Mammary epithelial cell (primary cell): ENCODE measurements at regions of chr2 and their contacts with region 1.

Region 1: GRCh38 chr2:228657807-228658402 is 476.4 kb upstream of the SPHKAP start:
- DNase-seq: peak; percentile 23
- H3K4me3 ChIP-seq: no peak overlapping the region
- H3K27ac ChIP-seq: no peak overlapping the region
- H3K4me1 ChIP-seq: no peaks in the 10 kb centered on the region
- H3K27me3 ChIP-seq: peaks cover 10% of the 10 kb centered on the region
- CTCF ChIP-seq: peak; percentile 46 to 60

Region 2: GRCh38 chr2:227884511-227884947 is 773.4 kb before region 1 on chr2:
- CTCF ChIA-PET with region 1: no interaction called
- dilution Hi-C with region 1: no loop called
- in situ Hi-C with region 1: loop called in 1 of 2 experiments (anchors 25 kb)
- intact Hi-C with region 1: no loop called
- DNase-seq: peak; percentile 58
- H3K4me3 ChIP-seq: no peak overlapping the region
- H3K27ac ChIP-seq: no peak overlapping the region
- H3K4me1 ChIP-seq: peaks cover 7% of the 10 kb centered on the region
- H3K27me3 ChIP-seq: no peaks in the 10 kb centered on the region
- CTCF ChIP-seq: peak; percentile 90 to 98

Region 3: DNA sequence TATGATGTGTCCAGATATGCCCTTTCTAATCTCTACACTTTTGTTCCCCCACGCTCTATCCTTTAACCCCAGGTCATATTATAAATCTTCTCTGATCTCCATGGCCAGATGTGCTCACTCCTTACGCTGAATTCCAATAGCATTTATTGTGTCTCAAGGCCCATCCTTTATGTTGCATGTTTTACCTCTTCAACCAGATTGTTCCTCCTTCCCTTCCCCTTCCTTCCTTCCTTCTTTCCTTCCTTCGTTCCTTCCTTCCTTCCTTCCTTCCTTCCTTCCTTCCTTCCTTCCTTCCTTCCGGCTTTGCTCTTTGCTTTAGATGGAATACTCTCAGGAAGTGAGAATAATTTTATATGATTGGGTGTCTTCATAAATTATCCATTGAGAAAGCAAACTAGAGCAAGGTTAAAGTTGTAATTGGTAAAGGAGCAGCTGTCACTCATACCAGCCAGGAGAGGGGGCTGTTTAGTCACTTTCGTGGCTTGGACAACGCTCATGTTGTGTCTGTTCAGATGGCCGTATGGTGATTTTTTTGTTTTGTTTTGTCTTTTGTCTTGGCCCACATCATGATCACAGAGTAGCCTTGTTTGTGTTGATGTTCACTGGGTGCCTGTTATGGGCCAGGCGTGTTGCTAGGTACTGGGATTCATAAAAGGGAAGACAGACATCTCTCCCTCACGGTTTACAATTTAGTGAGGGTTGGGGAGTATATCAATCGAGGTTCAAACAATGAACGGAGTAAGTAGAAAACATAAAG is 718.5 kb before region 1 on chr2:
- CTCF ChIA-PET with region 1: no interaction called
- dilution Hi-C with region 1: no loop called
- in situ Hi-C with region 1: no loop called
- intact Hi-C with region 1: loop called (anchors 2 kb)
- DNase-seq: peak; percentile 16
- H3K4me3 ChIP-seq: no peak overlapping the region
- H3K27ac ChIP-seq: no peak overlapping the region
- H3K4me1 ChIP-seq: no peaks in the 10 kb centered on the region
- H3K27me3 ChIP-seq: peaks cover 2% of the 10 kb centered on the region
- CTCF ChIP-seq: peak; percentile 68 to 74

Region 4: DNA sequence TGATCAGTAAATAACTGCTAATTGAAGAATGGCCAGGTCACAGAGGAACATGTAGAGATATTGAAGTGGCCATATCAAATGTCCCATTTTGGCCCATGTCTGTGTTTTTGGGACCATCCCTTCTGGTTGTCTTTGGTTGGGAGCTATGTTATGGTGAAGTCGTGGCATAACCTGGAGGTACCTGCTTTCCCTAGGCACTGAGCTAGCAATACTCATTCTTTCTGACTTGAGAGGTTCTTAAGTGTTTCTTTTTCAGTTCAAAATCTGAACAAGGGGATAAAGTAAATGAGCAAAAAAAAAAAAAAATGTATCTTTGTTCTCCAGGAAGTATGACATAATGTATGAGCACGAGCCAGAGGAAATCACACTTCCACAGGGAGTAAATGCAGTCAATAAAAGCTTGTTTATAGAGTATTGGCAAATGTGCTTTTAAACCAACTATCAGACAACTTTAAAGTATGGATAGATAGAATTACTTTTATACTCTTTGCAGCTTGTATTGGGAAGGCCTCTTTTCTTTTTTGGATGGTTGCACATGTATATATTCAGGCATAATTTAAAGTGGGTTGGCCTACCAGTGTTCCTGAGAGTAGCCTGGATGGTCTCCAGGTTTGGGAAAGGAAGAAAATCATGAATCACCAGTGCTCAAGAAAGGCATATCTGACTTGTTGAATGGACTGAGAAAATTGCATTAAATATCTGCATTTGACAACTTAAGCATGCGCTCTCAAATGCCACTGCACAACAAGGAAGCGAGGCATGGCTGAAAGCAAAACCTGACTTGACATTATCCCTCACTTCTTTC is 601.4 kb before region 1 on chr2:
- CTCF ChIA-PET with region 1: no interaction called
- dilution Hi-C with region 1: no loop called
- in situ Hi-C with region 1: loop called (anchors 10 to 25 kb)
- intact Hi-C with region 1: no loop called
- DNase-seq: no peak
- H3K4me3 ChIP-seq: no peak overlapping the region
- H3K27ac ChIP-seq: no peak overlapping the region
- H3K4me1 ChIP-seq: no peaks in the 10 kb centered on the region
- H3K27me3 ChIP-seq: no peaks in the 10 kb centered on the region
- CTCF ChIP-seq: no peak

Region 5: DNA sequence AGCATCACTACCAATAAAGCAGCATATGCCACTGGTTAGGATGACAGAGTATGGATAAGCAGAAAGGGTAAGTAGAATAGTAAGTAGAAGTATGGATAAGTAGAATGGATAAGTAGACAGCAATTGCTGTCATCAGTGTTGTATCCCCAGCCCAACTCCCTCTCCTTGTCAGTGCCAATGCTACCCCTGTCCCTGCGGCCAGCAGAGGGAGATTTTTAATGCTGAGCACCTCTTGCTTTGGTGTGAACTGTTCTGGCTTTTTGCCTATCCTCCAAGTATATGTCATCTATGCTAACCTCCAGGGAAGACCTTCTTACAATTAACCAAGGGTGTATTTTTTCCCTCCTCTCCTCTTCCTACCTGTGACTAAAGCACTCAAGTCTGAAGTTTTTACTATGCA is 339.7 kb before region 1 on chr2:
- CTCF ChIA-PET with region 1: interaction called, 3 read pairs
- dilution Hi-C with region 1: no loop called
- in situ Hi-C with region 1: no loop called
- intact Hi-C with region 1: loop called (anchors 1 kb)
- DNase-seq: peak; percentile 20
- H3K4me3 ChIP-seq: no peak overlapping the region
- H3K27ac ChIP-seq: no peak overlapping the region
- H3K4me1 ChIP-seq: no peaks in the 10 kb centered on the region
- H3K27me3 ChIP-seq: no peaks in the 10 kb centered on the region
- CTCF ChIP-seq: peak in 1 of 2 donors; percentile 32

Region 6: GRCh38 chr2:228503731-228504130 is 154.2 kb before region 1 on chr2:
- CTCF ChIA-PET with region 1: no interaction called
- dilution Hi-C with region 1: no loop called
- in situ Hi-C with region 1: no loop called
- intact Hi-C with region 1: no loop called
- DNase-seq: no peak
- H3K4me3 ChIP-seq: no peak overlapping the region
- H3K27ac ChIP-seq: no peak overlapping the region
- H3K4me1 ChIP-seq: no peaks in the 10 kb centered on the region
- H3K27me3 ChIP-seq: peaks cover 3% of the 10 kb centered on the region
- CTCF ChIP-seq: no peak